B cell (primary cell): ENCODE measurements at regions of chr1 and their contacts with region 1.

Region 1: DNA sequence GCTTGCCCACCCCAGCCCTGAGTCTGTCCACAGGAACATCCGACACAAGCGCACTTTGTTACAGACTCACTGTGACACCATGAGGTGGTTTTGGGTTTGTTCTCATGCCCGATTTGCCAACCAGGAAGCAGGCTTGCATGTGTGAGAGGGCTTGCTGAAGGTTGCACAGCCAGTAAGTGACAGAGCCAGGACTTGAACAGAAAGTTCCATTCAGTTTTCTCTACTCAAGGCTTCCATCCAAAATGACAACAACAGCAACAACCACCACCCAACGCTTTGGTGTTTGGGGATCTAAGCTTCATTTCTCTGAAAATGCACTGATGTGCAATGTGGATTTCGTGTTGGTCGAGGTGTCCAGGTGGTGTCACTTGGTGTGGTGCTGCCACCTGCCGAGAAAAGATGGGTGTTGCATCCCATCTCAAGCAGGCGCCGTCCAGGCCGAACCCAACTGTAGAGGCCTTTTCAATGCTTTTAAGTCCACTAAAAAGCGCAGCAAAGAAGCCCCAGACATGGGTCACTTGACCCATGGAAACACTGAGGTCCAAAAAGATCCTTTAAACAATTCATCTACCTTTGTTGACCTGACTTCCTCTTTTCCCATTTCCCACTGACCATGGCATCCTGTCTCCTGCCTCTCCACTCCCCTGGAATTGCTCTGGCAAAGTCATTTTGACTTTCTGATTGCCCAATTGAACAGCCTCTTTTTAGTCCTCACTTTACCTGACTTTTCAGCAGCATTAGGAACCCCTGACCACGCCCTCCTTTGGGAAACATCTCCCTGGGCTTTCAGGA is 12.2 kb downstream of the CITED4 start:
- DNase-seq: peak; percentile 85
- ATAC-seq: peak; percentile 98
- H3K4me3 ChIP-seq: no peak overlapping the region
- H3K4me3 Mint-ChIP-seq: peak overlapping the region; percentile 35
- H3K27ac ChIP-seq: no peak overlapping the region
- H3K27ac Mint-ChIP-seq: no peak overlapping the region
- H3K4me1 ChIP-seq: peaks cover 8% of the 10 kb centered on the region in 2 donors
- H3K4me1 Mint-ChIP-seq: peaks cover 11% of the 10 kb centered on the region
- H3K27me3 ChIP-seq: no peaks in the 10 kb centered on the region
- H3K27me3 Mint-ChIP-seq: peaks cover 5% of the 10 kb centered on the region
- CTCF ChIP-seq: peak; percentile 98

Region 2: DNA sequence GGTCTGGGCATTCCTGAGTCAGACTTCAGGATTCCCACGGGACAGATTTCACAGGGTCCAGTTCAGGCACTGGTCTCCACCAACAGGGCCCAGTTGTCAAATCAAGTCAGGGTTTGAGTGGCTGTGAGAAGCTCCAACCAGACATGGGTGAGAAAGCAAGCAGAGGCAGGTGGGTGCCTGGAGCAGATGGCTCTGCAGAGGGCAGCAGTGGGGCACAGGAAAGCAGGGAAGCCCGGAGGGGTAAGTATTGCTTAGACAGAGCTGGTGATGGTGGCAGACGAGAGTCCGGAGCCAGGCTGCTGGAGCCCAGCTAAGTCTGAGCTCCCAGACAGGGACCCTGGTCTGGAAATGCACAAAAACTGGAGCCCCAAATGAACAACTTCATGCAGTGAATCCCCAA is 224.9 kb before region 1 on chr1:
- CTCF ChIA-PET with region 1: interaction called, 11 read pairs
- POLR2A ChIA-PET with region 1: no interaction called
- intact Hi-C with region 1: no loop called
- DNase-seq: peak; percentile 48
- ATAC-seq: peak; percentile 57
- H3K4me3 ChIP-seq: no peak overlapping the region
- H3K4me3 Mint-ChIP-seq: no peak overlapping the region
- H3K27ac ChIP-seq: no peak overlapping the region
- H3K27ac Mint-ChIP-seq: no peak overlapping the region
- H3K4me1 ChIP-seq: peaks cover 6 to 11% of the 10 kb centered on the region in 2 donors
- H3K4me1 Mint-ChIP-seq: peaks cover 10% of the 10 kb centered on the region
- H3K27me3 ChIP-seq: peaks cover 0 to 17% (median 0%) of the 10 kb centered on the region in 4 experiments
- H3K27me3 Mint-ChIP-seq: peaks cover 2% of the 10 kb centered on the region
- CTCF ChIP-seq: peak; percentile 25

Region 3: GRCh38 chr1:41056907-41057306 is 206.9 kb after region 1 on chr1:
- CTCF ChIA-PET with region 1: no interaction called
- POLR2A ChIA-PET with region 1: no interaction called
- intact Hi-C with region 1: no loop called
- DNase-seq: no peak
- ATAC-seq: no peak
- H3K4me3 ChIP-seq: no peak overlapping the region
- H3K4me3 Mint-ChIP-seq: no peak overlapping the region
- H3K27ac ChIP-seq: no peak overlapping the region
- H3K27ac Mint-ChIP-seq: no peak overlapping the region
- H3K4me1 ChIP-seq: peaks cover 0 to 4% of the 10 kb centered on the region in 2 donors
- H3K4me1 Mint-ChIP-seq: peaks cover 6% of the 10 kb centered on the region
- H3K27me3 ChIP-seq: no peaks in the 10 kb centered on the region
- H3K27me3 Mint-ChIP-seq: no peaks in the 10 kb centered on the region
- CTCF ChIP-seq: no peak

Region 4: GRCh38 chr1:41109316-41110197 is 259.6 kb after region 1 on chr1:
- CTCF ChIA-PET with region 1: no interaction called
- POLR2A ChIA-PET with region 1: no interaction called
- intact Hi-C with region 1: no loop called
- DNase-seq: no peak
- ATAC-seq: no peak
- H3K4me3 ChIP-seq: no peak overlapping the region
- H3K4me3 Mint-ChIP-seq: no peak overlapping the region
- H3K27ac ChIP-seq: no peak overlapping the region
- H3K27ac Mint-ChIP-seq: no peak overlapping the region
- H3K4me1 ChIP-seq: peaks cover 4 to 6% of the 10 kb centered on the region in 2 donors
- H3K4me1 Mint-ChIP-seq: peaks cover 16% of the 10 kb centered on the region
- H3K27me3 ChIP-seq: no peaks in the 10 kb centered on the region
- H3K27me3 Mint-ChIP-seq: no peaks in the 10 kb centered on the region
- CTCF ChIP-seq: no peak